Heart right ventricle (tissue), 16 donors: ENCODE measurements at regions of chr13 and their contacts with region 1.

Region 1: DNA sequence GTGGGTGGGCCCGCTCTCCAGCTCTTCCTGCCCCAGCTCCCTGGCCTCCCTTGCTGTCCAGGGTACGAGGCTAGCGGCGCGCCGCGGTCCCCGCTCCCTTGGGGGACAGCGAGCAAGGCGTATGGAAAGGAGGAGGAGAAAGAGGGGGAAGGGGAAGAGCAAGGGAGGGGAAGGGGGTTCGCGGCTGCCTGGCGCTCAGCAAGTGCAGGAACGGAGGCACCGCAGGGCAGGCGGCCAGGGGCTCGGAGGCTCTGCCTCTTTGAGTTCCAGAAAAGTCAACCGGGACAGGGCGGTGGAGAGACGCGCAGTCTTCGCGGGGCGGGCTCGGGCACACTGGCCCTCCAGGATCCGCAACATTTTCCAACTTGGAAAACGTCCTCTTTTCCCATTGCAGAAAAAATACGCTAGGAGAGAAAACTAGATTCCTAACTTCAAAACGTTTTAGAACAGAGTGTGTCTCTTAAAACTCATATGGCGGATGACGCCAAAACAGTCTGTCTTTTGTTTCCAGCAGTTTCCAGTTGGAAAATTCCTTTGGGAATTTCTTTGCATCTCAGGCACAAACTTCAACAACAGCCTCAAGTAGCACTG is 23.1 kb upstream of the TNFRSF19 start:
- DNase-seq: peak; percentile 53 to 80
- ATAC-seq: peak; percentile 64 to 87 (median 78)
- H3K4me3 ChIP-seq: peak overlapping the region; percentile 24 to 61 (median 52)
- H3K27ac ChIP-seq: peak overlapping the region; percentile 68 to 92 (median 82)
- H3K4me1 ChIP-seq: peaks cover 0 to 30% (median 12%) of the 10 kb centered on the region in 9 donors
- H3K27me3 ChIP-seq: peaks cover 0 to 14% (median 0%) of the 10 kb centered on the region in 7 donors
- CTCF ChIP-seq: no peak

Region 2: GRCh38 chr13:23510979-23511735 is 35.9 kb before region 1 on chr13:
- intact Hi-C with region 1: loop called in 5 of 10 experiments (anchors 2 to 5 kb)
- DNase-seq: peak in 1 of 2 donors; percentile 40
- ATAC-seq: peak in 3 of 8 donors; percentile 13 to 35 (median 33)
- H3K4me3 ChIP-seq: no peak overlapping the region
- H3K27ac ChIP-seq: peak overlapping the region in 6 of 10 donors; percentile 15 to 53 (median 40)
- H3K4me1 ChIP-seq: peaks cover 6 to 56% (median 20%) of the 10 kb centered on the region in 9 donors
- H3K27me3 ChIP-seq: no peaks in the 10 kb centered on the region
- CTCF ChIP-seq: peak in 7 of 9 donors; percentile 17 to 60 (median 48)

Region 3: GRCh38 chr13:23715762-23716235 is 168.7 kb after region 1 on chr13:
- intact Hi-C with region 1: no loop called
- DNase-seq: no peak
- ATAC-seq: peak in 6 of 8 donors; percentile 29 to 64 (median 44)
- H3K4me3 ChIP-seq: no peak overlapping the region
- H3K27ac ChIP-seq: no peak overlapping the region
- H3K4me1 ChIP-seq: no peaks in the 10 kb centered on the region
- H3K27me3 ChIP-seq: no peaks in the 10 kb centered on the region
- CTCF ChIP-seq: peak in 7 of 9 donors; percentile 13 to 39 (median 27)